Psoas muscle (tissue), 8 donors: ENCODE measurements at regions of chr11 and their contacts with region 1.

Region 1: DNA sequence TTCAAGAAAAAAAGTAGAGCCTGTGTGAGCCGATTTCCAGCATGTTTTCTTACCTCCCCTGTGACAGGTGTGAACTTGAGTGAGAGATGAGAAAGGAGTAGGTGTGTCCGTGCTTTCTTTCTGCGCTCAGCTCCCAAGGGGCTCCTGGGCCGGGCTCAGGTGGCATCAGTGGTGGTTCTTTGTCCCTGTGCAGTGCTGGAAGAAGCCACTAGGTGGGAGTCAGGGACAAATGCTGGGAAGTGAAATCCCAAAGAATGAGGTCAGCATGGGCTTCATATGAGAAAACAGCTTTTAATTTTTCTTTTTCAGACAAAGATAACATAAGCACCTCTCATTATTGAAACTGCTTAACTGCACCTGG is 57.8 kb downstream of the PPFIBP2 start:
- DNase-seq: peak; percentile 49 to 76
- ATAC-seq: peak; percentile 67 to 82 (median 73)
- H3K4me3 ChIP-seq: no peak overlapping the region
- H3K27ac ChIP-seq: no peak overlapping the region
- H3K4me1 ChIP-seq: peaks cover 38% of the 10 kb centered on the region
- H3K27me3 ChIP-seq: no peaks in the 10 kb centered on the region
- CTCF ChIP-seq: peak; percentile 98

Region 2: DNA sequence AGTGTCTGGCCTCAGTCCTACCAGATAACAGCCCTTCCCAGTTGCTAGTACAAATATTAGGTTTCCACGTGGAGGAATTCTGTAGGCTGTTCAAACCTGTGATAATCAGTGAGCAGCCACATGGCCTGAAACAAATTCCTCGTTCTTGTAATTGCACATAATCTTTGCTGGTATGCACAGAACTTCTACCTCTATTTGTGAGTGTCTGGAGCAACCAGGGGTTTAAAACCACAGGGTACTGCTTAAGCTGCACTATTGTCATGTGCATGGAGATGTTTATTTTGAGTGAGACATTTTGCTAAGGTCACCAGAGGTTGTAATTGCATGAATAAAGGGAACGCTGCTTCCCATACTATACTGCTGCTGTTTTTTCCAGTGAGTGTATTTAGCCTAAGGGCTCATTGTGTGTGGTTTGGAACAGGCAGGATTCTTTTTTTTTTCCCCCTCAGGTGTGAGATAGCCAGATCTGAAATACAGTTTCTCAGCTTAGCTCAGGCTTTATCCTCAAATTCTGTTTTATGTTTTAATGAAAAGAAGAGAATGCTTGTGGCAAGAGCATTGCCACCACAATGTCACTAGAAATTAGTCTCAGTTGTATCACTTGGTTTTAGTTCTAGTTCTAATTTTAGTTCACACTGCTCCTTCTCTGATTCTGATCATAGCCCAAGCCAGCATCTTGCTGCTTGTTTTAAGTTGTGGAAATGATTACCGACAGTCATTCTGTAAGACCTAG is 41.2 kb after region 1 on chr11:
- intact Hi-C with region 1: loop called (anchors 5 kb)
- DNase-seq: no peak
- ATAC-seq: peak in 1 of 4 donors; percentile 11
- H3K4me3 ChIP-seq: no peak overlapping the region
- H3K27ac ChIP-seq: no peak overlapping the region
- H3K4me1 ChIP-seq: peaks cover 17% of the 10 kb centered on the region
- H3K27me3 ChIP-seq: no peaks in the 10 kb centered on the region
- CTCF ChIP-seq: no peak

Region 3: GRCh38 chr11:7657306-7658025 is 85.8 kb after region 1 on chr11:
- intact Hi-C with region 1: loop called in 1 of 2 experiments (anchors 2 kb)
- DNase-seq: peak; percentile 55 to 78
- ATAC-seq: peak; percentile 81 to 98 (median 95)
- H3K4me3 ChIP-seq: no peak overlapping the region
- H3K27ac ChIP-seq: no peak overlapping the region
- H3K4me1 ChIP-seq: no peaks in the 10 kb centered on the region
- H3K27me3 ChIP-seq: no peaks in the 10 kb centered on the region
- CTCF ChIP-seq: peak; percentile 43

Region 4: DNA sequence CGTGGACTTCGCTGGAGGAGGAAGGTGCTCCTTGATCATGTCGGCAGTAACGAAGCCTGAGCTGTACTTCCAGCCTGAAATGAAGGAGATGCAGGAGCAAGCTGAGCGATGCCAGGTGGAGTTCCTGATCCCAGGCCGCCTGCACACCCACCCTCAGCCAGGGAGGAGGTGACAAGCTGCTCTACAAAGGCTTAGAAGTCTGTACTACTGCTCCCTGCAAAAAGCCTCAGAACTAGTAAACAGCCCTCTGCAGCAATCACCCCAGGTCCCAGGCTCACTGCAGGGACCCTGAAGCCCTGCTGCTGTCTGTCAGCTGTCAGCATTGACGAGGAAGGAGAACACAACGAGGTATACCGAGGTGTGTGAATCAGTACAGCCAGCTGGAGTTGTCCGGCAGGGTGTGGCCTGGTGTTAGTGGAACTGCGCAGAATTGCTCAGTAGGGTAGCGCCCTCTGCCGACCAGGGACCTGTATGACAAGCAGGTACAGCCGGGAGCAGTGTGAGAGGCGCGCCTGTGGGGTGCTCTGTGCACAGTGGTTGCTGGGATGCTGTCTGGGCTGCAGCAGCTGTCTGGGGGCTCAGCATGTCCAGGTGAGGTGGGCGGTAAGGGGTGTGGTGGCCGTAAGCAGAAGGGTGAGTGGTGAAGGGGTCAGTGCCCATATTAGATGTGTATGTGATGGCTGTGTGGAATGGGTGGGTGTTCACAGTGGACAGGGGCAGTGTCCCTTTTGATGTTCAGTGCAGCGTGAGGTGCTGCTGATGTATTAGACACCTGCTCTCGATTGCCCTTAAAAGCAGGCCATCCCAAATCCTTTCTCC is 94.1 kb after region 1 on chr11:
- intact Hi-C with region 1: loop called in 1 of 2 experiments (anchors 5 kb)
- DNase-seq: peak; percentile 79 to 87
- ATAC-seq: peak; percentile 95 to 99 (median 98)
- H3K4me3 ChIP-seq: no peak overlapping the region
- H3K27ac ChIP-seq: no peak overlapping the region
- H3K4me1 ChIP-seq: no peaks in the 10 kb centered on the region
- H3K27me3 ChIP-seq: no peaks in the 10 kb centered on the region
- CTCF ChIP-seq: peak; percentile 81

Region 5: GRCh38 chr11:7986768-7987559 is 415.3 kb after region 1 on chr11 and contains the start of gene EIF3F:
- intact Hi-C with region 1: loop called in 1 of 2 experiments (anchors 10 kb)
- DNase-seq: peak; percentile 84 to 91
- ATAC-seq: peak; percentile 100
- H3K4me3 ChIP-seq: peak within 1 kb of the TSS; percentile 76
- H3K27ac ChIP-seq: peak within 1 kb of the TSS; percentile 80
- H3K4me1 ChIP-seq: peaks cover 28% of the 10 kb centered on the region
- H3K27me3 ChIP-seq: no peaks in the 10 kb centered on the region
- CTCF ChIP-seq: peak; percentile 85
- total RNA-seq, gene EIF3F: 149 to 208 (median 202) TPM